Motor neuron (in vitro differentiated cells): ENCODE measurements at regions of chr4 and their contacts with region 1.

Region 1: GRCh38 chr4:25367004-25367621 is 9.9 kb upstream of the ANAPC4 start:
- ATAC-seq: no peak
- H3K4me3 ChIP-seq: no peak overlapping the region
- H3K27ac ChIP-seq: no peak overlapping the region
- H3K4me1 ChIP-seq: no peaks in the 10 kb centered on the region

Region 2: GRCh38 chr4:25180524-25181131 is 186.5 kb before region 1 on chr4:
- in situ Hi-C with region 1: loop called in 2 of 9 experiments (anchors 25 kb)
- ATAC-seq: peak in 3 of 8 experiments; percentile 76 to 84 (median 81)
- H3K4me3 ChIP-seq: no peak overlapping the region
- H3K27ac ChIP-seq: no peak overlapping the region
- H3K4me1 ChIP-seq: peaks cover 8 to 11% of the 10 kb centered on the region in 2 donors